ENCODE measurements at regions of chr1 and their contacts with region 1.

Region 1: GRCh38 chr1:94962409-94963265 is 35.7 kb upstream of the CNN3 start:
- DNase-seq: no peak
- H3K4me3 ChIP-seq: no peak overlapping the region
- H3K27ac ChIP-seq: no peak overlapping the region
- H3K4me1 ChIP-seq: no peaks in the 10 kb centered on the region
- H3K27me3 ChIP-seq: no peaks in the 10 kb centered on the region
- CTCF ChIP-seq: no peak

Region 2: DNA sequence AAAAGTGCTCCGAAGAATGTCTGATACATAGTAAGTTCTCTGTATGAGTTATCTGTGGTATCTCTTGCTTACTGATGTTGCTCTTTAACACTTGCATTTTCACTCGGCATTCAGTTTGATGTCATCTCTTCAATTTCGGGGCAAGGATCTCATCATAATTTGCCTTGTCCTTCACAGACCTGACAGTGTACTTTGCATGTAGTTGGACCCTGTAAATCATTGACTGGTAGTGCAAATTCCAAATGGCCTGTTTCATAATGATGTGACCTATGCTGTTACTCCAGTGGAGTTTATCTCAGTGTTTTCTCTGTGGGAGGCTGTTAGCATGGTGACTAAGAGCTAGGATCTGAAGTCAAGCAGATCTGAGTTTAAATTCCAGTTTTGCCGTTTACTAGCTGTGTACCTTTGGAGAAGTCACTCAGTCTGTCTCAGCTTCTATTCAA is 578.6 kb before region 1 on chr1:
- CTCF ChIA-PET with region 1: no interaction called
- POLR2A ChIA-PET with region 1: no interaction called
- intact Hi-C with region 1: no loop called
- DNase-seq: no peak
- H3K4me3 ChIP-seq: no peak overlapping the region
- H3K27ac ChIP-seq: no peak overlapping the region
- H3K4me1 ChIP-seq: peaks cover 6% of the 10 kb centered on the region; the same call in 1 of the 2 replicates
- H3K27me3 ChIP-seq: no peaks in the 10 kb centered on the region
- CTCF ChIP-seq: no peak

Region 3: DNA sequence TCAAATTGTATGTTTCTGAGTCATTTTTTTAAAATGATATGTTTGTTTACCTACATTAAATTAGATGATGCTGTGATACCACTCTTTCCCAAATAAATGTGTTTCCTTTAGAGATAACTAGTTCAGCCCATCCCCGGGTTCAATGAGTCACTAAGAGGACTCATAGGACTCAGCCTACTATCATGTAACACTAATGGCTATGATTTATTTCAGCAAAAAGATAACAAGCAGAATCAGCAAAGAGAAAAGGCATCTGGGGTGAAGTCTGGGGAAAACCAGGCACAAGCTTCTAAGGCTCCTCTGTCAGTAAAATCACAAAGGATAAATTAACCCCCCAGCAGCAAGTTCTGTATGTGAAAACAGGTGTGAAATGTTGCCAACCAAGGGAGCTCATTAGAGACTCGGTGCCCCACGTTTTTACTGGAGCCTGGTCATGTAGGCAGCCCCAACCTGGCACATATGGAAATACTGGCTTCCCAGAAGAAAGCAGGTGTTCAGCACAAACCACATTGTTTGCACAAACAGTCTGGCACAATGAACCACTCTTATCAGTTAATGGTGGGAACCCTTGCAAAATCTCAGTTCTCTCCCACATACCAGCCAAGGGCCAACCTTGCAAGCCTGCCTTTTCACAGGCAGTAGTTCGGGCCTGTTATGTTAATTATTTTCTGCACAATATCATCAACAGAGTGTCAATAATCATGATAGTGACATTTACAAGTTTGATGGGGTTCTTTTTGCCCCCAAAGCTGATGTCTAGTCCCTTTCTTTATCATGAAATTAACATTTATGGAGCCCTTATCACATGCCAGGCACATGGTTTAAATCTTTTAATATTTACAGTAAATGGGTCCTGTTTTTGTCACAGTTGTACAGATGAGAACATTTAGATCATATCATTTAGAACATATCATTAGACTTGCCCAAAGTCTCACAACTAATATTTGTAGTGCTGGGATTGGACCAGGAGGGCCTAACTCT is 12.7 kb before region 1 on chr1:
- CTCF ChIA-PET with region 1: no interaction called
- POLR2A ChIA-PET with region 1: interaction called, 11 read pairs
- intact Hi-C with region 1: no loop called
- DNase-seq: peak; percentile 20 to 91
- H3K4me3 ChIP-seq: no peak overlapping the region
- H3K27ac ChIP-seq: peak overlapping the region; percentile 32
- H3K4me1 ChIP-seq: peaks cover 29% of the 10 kb centered on the region
- H3K27me3 ChIP-seq: no peaks in the 10 kb centered on the region
- CTCF ChIP-seq: no peak

Measured in PC-9 (cell line).